ENCODE measurements at regions of chr9 and their contacts with region 1.

Region 1: GRCh38 chr9:5886114-5886939 is 4.4 kb upstream of the MLANA start:
- DNase-seq: peak; percentile 73
- H3K4me3 ChIP-seq: no peak overlapping the region
- H3K27ac ChIP-seq: no peak overlapping the region
- H3K4me1 ChIP-seq: no peaks in the 10 kb centered on the region
- H3K27me3 ChIP-seq: no peaks in the 10 kb centered on the region
- CTCF ChIP-seq: peak; percentile 72 to 88 (median 80)
- EP300 ChIP-seq: no peak
- POLR2A ChIP-seq: no peak

Region 2: GRCh38 chr9:5813836-5814235 is 72.5 kb before region 1 on chr9:
- in situ Hi-C with region 1: no loop called
- intact Hi-C with region 1: no loop called
- DNase-seq: no peak
- H3K4me3 ChIP-seq: no peak overlapping the region
- H3K27ac ChIP-seq: no peak overlapping the region
- H3K4me1 ChIP-seq: peaks cover 0 to 6% (median 0%) of the 10 kb centered on the region in 4 donors
- H3K27me3 ChIP-seq: no peaks in the 10 kb centered on the region
- CTCF ChIP-seq: no peak
- EP300 ChIP-seq: no peak
- POLR2A ChIP-seq: no peak

Region 3: DNA sequence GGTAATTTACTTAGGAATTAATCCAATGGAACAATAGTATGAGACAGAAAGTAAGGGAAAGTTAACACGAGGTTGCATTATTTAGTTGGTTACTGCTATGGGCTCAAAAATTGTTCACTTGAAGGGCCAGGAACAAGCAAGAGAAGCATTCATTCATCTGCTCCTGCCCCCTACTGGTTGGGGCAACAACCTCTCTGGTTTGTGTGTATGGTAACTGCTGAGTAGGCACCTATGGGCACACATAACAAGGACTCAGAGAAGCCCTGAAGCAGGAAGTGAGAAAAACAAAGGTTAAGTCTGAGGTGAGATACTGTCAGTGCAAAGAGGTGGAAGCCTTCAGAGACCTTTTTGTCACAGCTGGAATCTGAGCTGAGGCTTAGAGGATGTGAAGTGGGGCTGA is 163.5 kb after region 1 on chr9:
- in situ Hi-C with region 1: loop called (anchors 5 to 25 kb)
- intact Hi-C with region 1: loop called (anchors 10 kb)
- DNase-seq: peak; percentile 32
- H3K4me3 ChIP-seq: no peak overlapping the region
- H3K27ac ChIP-seq: no peak overlapping the region
- H3K4me1 ChIP-seq: peaks cover 0 to 8% (median 4%) of the 10 kb centered on the region in 4 donors
- H3K27me3 ChIP-seq: no peaks in the 10 kb centered on the region
- CTCF ChIP-seq: peak in 3 of 5 experiments; percentile 14 to 42 (median 31)
- EP300 ChIP-seq: no peak
- POLR2A ChIP-seq: no peak

Measured in transverse colon (tissue), 4 donors.